Colonic mucosa (tissue), 4 donors: ENCODE measurements at regions of chr20 and their contacts with region 1.

Region 1: GRCh38 chr20:47379433-47380150 is 23.1 kb upstream of the ZMYND8 start:
- DNase-seq: no peak
- H3K4me3 ChIP-seq: no peak overlapping the region
- H3K27ac ChIP-seq: no peak overlapping the region
- H3K4me1 ChIP-seq: no peaks in the 10 kb centered on the region
- H3K27me3 ChIP-seq: no peaks in the 10 kb centered on the region
- CTCF ChIP-seq: no peak

Region 2: GRCh38 chr20:47173596-47174216 is 205.9 kb before region 1 on chr20:
- intact Hi-C with region 1: no loop called
- DNase-seq: no peak
- H3K4me3 ChIP-seq: no peak overlapping the region
- H3K27ac ChIP-seq: no peak overlapping the region
- H3K4me1 ChIP-seq: no peaks in the 10 kb centered on the region
- H3K27me3 ChIP-seq: no peaks in the 10 kb centered on the region
- CTCF ChIP-seq: no peak

Region 3: DNA sequence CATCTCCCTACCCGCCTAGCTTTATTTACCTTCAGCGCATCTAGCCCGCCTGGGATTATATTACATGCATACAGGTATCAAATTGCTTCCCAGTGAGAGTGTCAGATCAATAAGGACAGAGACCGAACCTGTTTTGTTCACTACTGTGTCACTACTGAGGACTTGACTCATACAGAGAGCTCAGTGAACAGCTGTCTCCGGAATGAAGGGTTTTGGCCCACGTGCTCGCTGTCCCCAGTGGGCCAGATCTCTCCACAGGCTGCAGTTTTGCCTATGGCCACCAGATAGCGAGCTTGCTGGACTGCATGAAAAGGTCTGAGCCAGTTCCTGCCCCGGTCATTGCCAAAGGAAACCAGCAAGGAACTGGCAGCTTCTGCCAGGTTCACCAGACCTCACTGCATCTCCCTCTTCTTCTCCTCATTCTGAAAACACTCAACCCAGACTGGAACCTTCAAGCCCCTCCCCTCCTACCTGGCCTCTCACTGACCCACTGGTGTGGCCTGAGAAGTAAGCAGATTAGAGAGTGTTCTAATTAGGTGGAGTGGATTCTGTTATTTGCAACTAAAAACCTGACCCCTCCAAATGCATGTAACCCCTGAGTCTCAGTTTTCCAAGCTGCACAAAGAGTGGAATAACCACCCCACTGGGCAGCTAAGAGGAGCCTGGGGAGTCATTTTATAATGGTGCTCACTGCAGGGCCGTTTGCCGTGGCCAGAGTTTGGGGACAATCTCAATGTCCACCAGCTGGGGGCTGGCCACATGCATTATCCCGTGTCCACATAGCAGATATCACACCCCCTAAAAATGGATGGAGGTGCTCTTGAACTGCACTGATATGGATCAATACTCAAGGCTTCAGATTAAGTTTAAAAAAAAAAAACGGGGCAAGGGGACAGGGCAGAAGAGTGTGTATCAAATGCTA is 173.8 kb before region 1 on chr20:
- intact Hi-C with region 1: loop called (anchors 5 kb)
- DNase-seq: peak; percentile 27
- H3K4me3 ChIP-seq: no peak overlapping the region
- H3K27ac ChIP-seq: no peak overlapping the region
- H3K4me1 ChIP-seq: no peaks in the 10 kb centered on the region
- H3K27me3 ChIP-seq: no peaks in the 10 kb centered on the region
- CTCF ChIP-seq: peak; percentile 99

Region 4: GRCh38 chr20:47296950-47297349 is 82.6 kb before region 1 on chr20:
- intact Hi-C with region 1: loop called (anchors 5 kb)
- DNase-seq: no peak
- H3K4me3 ChIP-seq: no peak overlapping the region
- H3K27ac ChIP-seq: no peak overlapping the region
- H3K4me1 ChIP-seq: no peaks in the 10 kb centered on the region
- H3K27me3 ChIP-seq: no peaks in the 10 kb centered on the region
- CTCF ChIP-seq: no peak